Activated T-helper 2 cell treated with anti-CD3 and anti-CD28 coated beads, Interferon-gamma antibody, Interleukin-2, Interleukin-4, amounts not matched to agents 10 μg/mL and 5 μg/mL and 100 μg/mL, durations not matched to agents 14 hours and 24 hours and 36 hours (primary cell): ENCODE measurements at regions of chr4 and their contacts with region 1.

Region 1: GRCh38 chr4:100895556-100896197 is 377.9 kb upstream of the EMCN start:
- DNase-seq: no peak
- H3K4me3 Mint-ChIP-seq: peak overlapping the region; percentile 56
- H3K27ac Mint-ChIP-seq: no peak overlapping the region
- H3K4me1 Mint-ChIP-seq: peaks cover 14% of the 10 kb centered on the region
- H3K27me3 Mint-ChIP-seq: peaks cover 3% of the 10 kb centered on the region

Region 2: DNA sequence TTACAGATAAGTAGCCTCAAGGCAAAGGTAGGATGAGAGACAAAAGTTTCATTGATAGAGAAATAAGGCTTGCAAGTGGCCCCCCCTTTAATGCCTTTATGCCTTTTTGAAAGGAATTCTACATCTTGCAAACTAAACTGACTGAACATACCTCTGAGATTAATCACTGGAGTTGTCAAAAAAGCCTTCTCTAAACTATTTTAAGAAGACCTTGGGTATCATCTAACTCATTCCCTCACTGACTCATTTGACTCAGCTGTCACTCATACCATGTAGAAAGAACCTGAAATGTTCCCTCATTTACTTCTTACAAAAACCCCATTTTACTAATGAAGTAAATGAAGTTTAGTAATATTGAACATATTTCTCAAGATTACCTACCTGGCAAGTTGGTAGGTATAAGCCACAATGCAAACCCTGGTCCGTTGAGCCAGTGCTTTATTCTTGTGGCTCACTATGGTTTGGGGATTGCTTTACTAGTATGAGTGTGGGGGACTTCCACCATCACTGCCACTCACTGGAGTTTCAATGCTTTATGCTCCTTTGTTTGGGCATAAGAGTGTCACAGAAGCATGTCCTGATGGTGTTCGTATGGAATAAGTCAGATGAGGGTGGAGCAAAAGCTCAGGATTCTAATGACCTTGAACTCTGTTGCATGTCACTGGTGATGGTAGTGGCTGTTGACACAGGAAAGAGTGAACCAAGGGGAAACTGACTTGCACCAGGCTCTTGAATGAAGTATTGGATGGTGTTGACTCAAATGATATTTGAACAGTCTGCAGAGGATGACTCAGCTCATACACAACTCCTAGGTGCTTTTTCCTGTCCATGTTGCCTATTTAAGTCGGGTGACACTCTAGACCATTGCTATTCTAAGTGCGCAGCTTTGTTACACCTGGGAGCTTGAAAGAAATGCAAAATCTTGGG is 72.3 kb before region 1 on chr4:
- intact Hi-C with region 1: loop called (anchors 5 kb)
- DNase-seq: peak; percentile 9
- H3K4me3 Mint-ChIP-seq: no peak overlapping the region
- H3K27ac Mint-ChIP-seq: peak overlapping the region; percentile 76
- H3K4me1 Mint-ChIP-seq: peaks cover 22% of the 10 kb centered on the region
- H3K27me3 Mint-ChIP-seq: no peaks in the 10 kb centered on the region